Calu3 (cell line): ENCODE measurements at regions of chr15 and their contacts with region 1.

Region 1: DNA sequence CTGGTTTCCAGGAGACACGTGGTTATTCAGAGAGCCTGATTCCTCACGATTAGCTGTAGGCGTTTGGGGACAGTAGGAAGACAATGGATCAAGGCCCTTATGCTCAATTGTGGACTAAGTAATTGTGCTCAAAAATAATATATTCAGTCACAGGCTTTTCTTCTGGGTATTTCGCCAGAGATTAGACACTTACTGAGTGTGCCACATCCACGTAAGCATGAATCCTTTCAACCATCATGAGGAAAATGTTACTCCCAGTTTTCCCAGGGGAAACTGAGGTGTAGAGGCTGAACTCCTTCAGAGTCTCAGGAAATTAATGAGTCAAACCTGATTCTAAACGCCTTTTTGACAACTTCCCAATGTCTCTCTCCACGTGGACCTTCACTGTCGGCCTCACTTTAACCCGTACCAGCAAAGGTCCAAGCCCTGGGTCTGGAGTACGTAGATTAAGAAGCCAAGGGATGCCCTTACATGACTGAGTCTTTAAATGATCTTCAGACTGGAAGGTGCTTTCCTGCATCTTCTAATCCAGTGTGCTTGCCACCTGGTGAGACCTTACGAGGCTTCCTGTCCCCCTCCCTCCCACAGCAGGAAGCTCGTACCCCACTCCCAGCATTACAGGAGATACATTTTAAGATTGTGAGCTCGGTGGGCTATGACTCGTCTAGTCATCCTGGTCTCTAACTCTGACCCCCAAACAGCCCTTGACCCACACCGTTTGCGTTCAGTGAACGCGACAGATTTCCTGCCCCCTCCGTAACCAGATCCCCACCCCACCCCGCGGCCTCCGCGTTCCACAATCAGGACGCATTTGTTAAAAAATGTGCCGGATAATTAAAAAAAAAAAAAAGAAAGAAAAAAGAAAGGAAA is 1.7 kb downstream of the PKM start:
- DNase-seq: no peak
- H3K4me3 Mint-ChIP-seq: peak overlapping the region; percentile 91
- H3K27ac Mint-ChIP-seq: peak overlapping the region; percentile 90
- H3K4me1 Mint-ChIP-seq: peaks cover 54% of the 10 kb centered on the region
- H3K27me3 Mint-ChIP-seq: no peaks in the 10 kb centered on the region
- CTCF ChIP-seq: no peak

Region 2: DNA sequence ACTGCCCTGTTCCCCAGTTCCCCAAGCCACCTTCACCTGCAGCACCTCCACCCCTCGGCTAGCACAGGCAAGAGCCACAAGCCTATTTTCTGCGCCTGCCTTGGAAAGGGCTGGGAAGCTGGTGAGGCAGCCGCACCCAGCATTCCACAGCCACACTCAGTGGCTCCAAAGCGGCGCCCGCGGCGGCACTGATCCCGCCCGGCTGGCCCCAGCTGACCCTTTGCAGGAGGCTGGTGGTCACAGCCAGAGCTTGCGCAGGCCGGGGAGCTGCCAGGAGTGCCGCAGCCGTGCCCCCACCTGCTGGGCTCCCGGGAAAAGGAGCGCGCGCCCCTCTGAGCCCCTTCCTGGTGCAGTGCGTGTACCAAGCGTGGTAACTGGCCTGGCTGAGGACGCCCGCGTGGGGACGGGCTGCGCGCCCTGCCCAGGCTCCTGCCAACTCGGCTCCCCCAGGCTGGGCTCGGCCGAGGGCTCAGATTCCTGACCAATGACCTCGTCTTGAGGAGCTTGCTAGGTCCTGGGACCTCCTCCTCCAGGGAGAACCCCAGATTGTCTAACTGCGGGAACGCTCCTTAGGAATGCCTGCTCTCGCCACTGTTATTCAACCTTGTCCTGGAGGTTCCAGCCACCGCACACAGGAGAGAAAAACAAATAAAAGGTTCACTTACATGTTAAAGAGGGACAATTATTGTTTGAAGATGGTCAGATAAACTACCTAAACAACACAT is 45.0 kb before region 1 on chr15:
- CTCF ChIA-PET with region 1: no interaction called
- intact Hi-C with region 1: no loop called
- DNase-seq: peak; percentile 71
- H3K4me3 Mint-ChIP-seq: peak overlapping the region; percentile 64
- H3K27ac Mint-ChIP-seq: no peak overlapping the region
- H3K4me1 Mint-ChIP-seq: no peaks in the 10 kb centered on the region
- H3K27me3 Mint-ChIP-seq: no peaks in the 10 kb centered on the region
- CTCF ChIP-seq: no peak

Region 3: GRCh38 chr15:72199711-72200212 is 29.5 kb before region 1 on chr15:
- CTCF ChIA-PET with region 1: interaction called, 10 read pairs
- intact Hi-C with region 1: no loop called
- DNase-seq: peak; percentile 88
- H3K4me3 Mint-ChIP-seq: no peak overlapping the region
- H3K27ac Mint-ChIP-seq: no peak overlapping the region
- H3K4me1 Mint-ChIP-seq: peaks cover 38% of the 10 kb centered on the region
- H3K27me3 Mint-ChIP-seq: no peaks in the 10 kb centered on the region
- CTCF ChIP-seq: peak; percentile 93

Region 4: GRCh38 chr15:72206677-72207000 is 22.7 kb before region 1 on chr15:
- CTCF ChIA-PET with region 1: interaction called, 12 read pairs
- intact Hi-C with region 1: no loop called
- DNase-seq: no peak
- H3K4me3 Mint-ChIP-seq: no peak overlapping the region
- H3K27ac Mint-ChIP-seq: peak overlapping the region; percentile 64
- H3K4me1 Mint-ChIP-seq: peaks cover 37% of the 10 kb centered on the region
- H3K27me3 Mint-ChIP-seq: no peaks in the 10 kb centered on the region
- CTCF ChIP-seq: no peak

Region 5: DNA sequence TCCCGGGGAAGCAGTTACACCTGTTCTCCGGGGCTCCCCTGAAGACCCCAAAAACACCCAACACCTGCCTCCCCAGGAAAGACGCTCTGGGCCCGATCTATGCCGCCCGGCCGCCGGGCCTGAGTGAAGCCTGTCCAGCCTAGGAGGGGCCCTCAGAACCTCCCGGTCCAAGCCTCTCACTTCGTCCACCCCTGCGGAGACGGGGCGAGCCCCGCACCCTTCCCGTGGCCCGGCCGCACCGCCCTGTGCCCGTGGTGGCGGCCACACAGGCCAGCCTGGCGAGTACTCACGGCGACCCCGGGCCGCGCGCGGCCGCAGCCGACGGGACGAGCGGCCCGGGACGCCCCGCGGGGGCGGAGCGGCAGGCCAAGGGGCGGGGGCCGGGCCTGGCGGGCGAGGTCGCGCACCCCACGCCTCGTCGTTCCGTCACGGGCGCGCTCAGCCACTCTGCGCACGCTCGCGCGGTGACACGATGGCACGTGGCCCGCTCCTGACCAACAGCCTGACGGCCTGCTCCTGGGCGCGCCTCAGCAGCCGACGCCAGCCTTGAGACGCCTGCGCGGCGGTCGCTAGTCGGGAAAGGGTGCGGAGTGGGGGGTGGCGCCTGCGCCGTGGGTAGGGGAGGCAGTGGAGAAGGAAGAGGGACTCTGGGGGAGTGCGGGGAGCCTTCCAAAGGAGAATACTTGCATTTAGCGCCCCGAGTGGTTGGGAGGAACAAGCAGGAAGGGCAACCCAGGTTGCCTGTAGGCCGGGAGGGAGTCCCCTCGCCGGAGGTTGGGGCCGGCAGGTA is 43.1 kb after region 1 on chr15 and contains the start of gene PARP6:
- CTCF ChIA-PET with region 1: interaction called, 4 read pairs
- intact Hi-C with region 1: loop called (anchors 5 kb)
- DNase-seq: peak; percentile 99
- H3K4me3 Mint-ChIP-seq: peak within 1 kb of the TSS; percentile 89
- H3K27ac Mint-ChIP-seq: peak within 1 kb of the TSS; percentile 73
- H3K4me1 Mint-ChIP-seq: peaks cover 31% of the 10 kb centered on the region
- H3K27me3 Mint-ChIP-seq: peaks cover 25% of the 10 kb centered on the region
- CTCF ChIP-seq: peak; percentile 60
- total RNA-seq, gene PARP6: 110 and 125 TPM in 2 replicates